GM13977 (cell line): ENCODE measurements at regions of chr5 and their contacts with region 1.

Region 1: DNA sequence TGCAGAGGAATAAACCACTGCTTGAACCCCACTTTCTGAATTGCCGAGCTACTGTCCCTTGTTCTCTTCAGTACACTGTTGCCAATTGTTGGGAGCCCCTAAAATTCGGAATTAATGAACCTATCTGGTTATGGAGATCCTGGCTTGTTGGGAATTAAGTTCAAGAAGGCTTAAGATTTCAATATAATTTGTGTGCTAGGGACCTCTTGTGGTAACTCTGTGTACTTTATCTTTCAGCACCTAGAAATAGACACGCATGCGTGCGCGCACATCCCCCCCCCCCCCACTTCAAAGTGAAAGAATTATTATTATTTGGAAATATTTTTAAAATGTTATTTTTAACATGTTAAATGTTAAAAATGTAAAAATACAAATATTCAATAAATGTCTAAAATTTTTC is 53.3 kb upstream of the FAM169A start:
- DNase-seq: peak; percentile 60
- CTCF ChIP-seq: peak; percentile 53

Region 2: DNA sequence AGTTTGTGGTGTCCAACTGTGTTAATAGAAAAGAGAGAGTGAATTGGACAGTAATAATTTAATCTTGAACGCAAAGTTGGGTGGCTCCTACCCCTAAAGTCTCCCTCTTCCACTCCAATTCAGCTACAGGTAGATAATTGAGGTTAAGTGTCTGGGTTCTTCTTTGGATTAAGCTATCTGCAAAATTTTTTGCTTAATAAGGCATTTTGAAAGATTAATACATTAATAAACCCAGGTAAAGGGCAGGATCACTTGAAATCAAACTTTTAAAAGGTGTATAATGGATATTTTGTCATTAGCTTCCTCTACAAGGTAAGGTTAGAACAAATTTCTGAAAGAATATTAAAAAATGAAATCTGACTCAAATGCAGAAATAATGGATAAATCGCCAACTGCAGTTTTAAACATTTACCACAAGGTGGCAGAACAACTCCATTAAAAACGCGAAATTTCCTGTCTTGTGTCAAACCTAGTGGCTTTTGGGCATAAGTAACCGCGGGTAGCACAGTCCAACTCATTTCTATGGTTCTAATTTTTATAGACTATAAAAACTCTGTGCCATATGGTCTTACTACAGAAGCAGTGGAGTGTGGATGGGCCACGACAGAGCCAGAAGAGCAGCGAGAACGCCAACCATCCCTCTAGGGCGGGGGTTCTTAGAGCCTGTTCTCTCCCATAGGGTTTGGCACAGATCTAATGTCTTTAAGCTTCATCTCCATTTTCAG is 1017.0 kb before region 1 on chr5:
- in situ Hi-C with region 1: loop called (anchors 25 kb)
- DNase-seq: peak; percentile 57
- CTCF ChIP-seq: peak; percentile 70

Region 3: GRCh38 chr5:74667396-74667795 is 252.1 kb before region 1 on chr5:
- in situ Hi-C with region 1: loop called (anchors 10 kb)
- DNase-seq: no peak
- CTCF ChIP-seq: no peak

Region 4: GRCh38 chr5:74766849-74767578 is 152.5 kb before region 1 on chr5 and contains the starts of genes GFM2 and NSA2:
- in situ Hi-C with region 1: loop called (anchors 25 kb)
- DNase-seq: peak; percentile 77
- CTCF ChIP-seq: no peak

Region 5: DNA sequence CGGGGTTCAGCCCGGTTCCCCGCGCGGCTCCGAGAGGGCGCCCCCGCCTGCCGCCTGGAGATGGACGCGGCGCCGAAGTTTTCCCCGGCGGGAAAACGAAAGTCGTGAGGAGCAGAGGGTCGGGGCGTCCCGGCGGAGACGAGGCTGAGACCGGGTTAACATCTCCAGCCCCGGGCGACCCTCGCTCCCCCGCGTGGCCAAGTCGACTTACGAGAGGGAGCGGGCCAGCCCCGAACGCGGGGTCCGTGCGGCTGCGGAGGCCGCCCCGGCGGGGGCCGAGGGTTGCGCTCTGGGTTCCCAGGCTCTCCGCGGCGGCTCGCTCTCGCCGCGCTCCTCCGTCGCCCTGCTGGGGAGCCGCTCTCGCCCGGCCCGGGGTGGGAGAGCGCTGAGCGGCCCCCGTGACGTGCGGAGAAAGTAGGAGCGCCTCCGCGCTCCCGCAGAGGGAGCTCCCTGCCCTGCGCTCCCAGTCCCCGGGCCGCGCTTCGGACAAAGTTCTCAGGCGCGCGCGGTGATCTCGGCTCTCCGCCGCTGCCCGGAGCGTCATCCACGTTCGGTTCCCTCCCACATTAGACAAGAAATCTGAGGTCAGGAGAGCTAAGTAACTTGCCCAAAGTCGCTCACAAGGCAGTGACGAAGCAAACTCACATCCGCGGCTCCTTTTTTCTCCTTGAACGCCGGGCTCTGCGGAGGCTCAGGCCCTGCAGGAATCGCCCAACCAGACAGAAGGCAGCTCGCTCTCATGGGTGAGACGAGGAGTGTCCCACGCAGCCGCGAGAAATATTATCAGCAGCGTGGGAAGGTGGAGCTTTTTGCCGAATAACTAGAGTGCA is 134.0 kb after region 1 on chr5:
- in situ Hi-C with region 1: no loop called
- DNase-seq: peak; percentile 31
- CTCF ChIP-seq: peak; percentile 16

Region 6: DNA sequence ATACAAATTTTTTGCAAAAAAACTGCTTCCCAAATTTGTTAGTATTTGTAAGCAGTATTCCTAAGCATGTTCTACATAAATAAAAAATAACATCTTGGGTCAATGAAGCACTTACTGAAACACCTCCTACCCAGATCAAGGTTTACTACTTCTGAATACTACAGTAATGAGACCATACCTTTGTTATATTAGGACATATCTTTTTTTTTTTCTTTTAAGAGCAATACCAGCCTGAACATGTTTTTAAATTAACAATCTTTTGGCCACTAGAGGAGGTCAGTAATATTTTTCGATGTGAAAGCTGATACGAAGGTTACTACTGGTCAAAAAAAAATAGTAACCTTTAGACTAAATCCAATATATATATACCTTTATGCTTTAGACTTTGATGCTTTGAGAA is 519.2 kb after region 1 on chr5:
- in situ Hi-C with region 1: no loop called
- DNase-seq: no peak
- CTCF ChIP-seq: no peak